ENCODE measurements at regions of chr1 and their contacts with region 1.

Region 1: DNA sequence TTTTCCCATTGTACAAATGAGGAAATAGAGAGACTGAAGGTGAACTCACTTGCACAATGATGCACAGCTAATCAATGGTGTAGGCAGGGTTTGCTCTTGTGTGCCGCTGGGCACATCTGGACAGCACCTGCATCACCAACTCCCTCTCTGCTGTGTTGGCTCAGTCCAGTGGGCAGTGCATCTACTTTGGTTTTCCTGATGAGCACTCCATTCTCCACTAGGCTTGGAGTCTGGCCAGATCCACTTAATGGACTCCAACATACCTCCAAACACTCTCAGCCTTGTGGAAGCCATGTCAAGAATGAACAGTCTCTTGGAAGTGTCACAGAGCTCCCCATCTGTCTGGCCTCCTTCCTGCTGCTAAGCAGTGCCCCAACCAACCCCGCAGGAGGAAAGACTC is 152.2 kb downstream of the HIVEP3 start:
- DNase-seq: no peak
- H3K4me3 ChIP-seq: no peak overlapping the region
- H3K27ac ChIP-seq: peak overlapping the region in 1 of 2 donors; percentile 76
- H3K4me1 ChIP-seq: peaks cover 2 to 7% of the 10 kb centered on the region in 2 donors
- H3K27me3 ChIP-seq: no peaks in the 10 kb centered on the region
- CTCF ChIP-seq: no peak
- POLR2A ChIP-seq: no peak

Region 2: DNA sequence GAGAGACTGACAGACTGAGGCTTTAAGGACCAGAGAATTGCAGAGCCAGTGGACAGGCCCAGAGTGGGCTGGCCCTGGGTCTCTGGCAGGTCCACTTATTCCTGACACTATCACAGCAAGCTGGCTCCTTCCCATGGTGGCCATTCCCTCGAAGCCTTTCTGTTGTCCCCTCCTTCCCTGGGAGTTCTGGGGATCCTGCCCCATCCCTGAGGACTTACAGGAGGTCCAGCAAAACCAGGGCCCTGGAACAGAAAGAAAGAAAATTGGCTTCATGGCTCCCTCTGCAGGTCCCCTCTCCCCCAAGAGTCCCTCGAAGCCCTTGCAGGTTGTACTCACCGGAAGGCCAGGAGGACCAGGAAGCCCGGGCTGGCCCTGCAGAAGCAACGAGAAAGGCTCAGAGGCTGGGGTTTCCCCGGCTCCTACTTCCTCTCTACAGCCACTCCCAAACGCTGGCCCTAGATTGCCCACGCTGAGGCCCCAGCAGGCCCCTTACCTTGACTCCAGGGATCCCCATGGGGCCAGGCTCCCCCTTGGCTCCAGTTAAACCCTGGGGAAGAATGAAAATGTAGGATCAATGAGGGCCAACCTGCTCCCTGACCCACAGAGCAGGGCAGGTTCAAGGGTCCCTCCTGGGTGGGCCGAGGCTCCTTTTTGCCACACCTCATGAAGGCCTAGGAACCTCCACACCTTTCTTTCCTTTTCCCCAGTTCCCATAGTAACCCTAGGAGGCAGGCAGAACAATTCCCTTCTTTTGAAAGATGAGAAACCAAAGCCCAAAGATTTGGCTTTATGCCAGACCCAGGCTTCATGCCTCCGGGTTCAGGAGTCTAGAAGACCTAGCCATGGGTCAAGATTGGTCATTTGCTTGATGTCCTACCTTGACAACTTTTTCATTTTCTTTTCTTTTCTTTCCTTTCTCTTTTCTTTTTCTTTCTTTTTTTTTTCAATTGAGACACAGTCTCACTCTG is 1454.0 kb before region 1 on chr1:
- intact Hi-C with region 1: no loop called
- DNase-seq: no peak
- H3K4me3 ChIP-seq: no peak overlapping the region
- H3K27ac ChIP-seq: no peak overlapping the region
- H3K4me1 ChIP-seq: peaks cover 5 to 13% of the 10 kb centered on the region in 2 donors
- H3K27me3 ChIP-seq: peaks cover 6 to 8% of the 10 kb centered on the region in 2 donors
- CTCF ChIP-seq: no peak
- POLR2A ChIP-seq: no peak

Region 3: DNA sequence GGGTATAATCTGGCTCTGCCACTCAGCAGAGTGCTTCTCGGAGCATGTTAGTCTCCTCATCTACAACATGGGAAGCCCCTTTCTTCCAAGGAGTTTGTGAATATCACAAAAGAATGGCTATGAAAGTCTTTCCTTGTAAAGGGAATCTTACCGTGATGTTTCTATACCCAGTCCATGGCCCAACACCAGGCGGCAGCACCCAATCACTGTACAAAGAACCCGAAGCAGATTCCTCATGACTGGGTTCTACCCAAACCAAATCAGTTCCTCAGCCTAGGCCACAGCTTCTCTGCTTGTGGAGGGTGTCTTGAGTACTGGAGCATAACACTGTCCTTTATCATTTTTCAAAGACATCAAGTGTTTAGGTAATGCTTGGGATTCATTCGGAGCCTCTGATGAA is 728.4 kb before region 1 on chr1:
- intact Hi-C with region 1: no loop called
- DNase-seq: no peak
- H3K4me3 ChIP-seq: no peak overlapping the region
- H3K27ac ChIP-seq: no peak overlapping the region
- H3K4me1 ChIP-seq: no peaks in the 10 kb centered on the region
- H3K27me3 ChIP-seq: no peaks in the 10 kb centered on the region
- CTCF ChIP-seq: no peak
- POLR2A ChIP-seq: no peak

Region 4: DNA sequence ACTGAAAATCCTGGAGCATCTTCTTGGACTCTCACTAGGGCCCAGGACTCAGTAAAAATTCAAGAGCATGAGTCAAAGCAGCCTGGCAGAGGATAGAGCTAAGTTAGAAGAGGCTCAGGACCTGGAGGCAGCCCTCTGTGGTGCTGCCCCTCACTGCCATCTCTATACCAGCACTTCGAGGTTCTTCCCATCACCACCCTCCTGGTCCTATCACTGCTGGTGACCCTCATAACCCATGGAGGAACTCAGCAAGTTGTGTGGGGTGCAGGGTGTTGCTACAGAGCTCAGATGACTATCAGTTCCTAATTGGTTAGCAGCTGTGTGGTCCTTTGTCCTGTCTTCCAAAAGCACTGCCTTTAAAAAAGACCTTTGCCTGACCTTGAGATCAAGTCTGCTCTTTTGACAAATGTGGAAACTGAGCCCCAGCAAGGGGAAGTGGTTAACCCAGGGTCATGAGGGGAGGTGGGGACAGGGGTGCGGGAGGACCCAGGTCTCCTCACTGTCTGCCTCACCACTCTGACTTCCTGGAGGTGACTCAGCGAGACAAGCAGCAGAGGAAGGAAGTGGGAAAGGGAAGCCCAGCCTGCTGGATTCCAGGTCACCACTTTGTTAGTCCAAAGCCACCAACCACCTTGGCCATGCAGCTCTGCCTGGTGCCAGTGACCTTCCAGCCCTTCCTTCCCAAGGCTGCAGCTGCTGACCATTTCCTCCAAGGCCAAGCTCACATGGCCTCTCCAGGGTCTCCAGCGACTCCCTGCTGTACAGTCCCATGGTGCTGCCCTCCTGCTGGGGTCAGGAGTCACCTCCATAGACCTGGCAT is 82.7 kb before region 1 on chr1:
- intact Hi-C with region 1: no loop called
- DNase-seq: no peak
- H3K4me3 ChIP-seq: no peak overlapping the region
- H3K27ac ChIP-seq: no peak overlapping the region
- H3K4me1 ChIP-seq: peaks cover 0 to 4% of the 10 kb centered on the region in 2 donors
- H3K27me3 ChIP-seq: no peaks in the 10 kb centered on the region
- CTCF ChIP-seq: no peak
- POLR2A ChIP-seq: no peak

Region 5: DNA sequence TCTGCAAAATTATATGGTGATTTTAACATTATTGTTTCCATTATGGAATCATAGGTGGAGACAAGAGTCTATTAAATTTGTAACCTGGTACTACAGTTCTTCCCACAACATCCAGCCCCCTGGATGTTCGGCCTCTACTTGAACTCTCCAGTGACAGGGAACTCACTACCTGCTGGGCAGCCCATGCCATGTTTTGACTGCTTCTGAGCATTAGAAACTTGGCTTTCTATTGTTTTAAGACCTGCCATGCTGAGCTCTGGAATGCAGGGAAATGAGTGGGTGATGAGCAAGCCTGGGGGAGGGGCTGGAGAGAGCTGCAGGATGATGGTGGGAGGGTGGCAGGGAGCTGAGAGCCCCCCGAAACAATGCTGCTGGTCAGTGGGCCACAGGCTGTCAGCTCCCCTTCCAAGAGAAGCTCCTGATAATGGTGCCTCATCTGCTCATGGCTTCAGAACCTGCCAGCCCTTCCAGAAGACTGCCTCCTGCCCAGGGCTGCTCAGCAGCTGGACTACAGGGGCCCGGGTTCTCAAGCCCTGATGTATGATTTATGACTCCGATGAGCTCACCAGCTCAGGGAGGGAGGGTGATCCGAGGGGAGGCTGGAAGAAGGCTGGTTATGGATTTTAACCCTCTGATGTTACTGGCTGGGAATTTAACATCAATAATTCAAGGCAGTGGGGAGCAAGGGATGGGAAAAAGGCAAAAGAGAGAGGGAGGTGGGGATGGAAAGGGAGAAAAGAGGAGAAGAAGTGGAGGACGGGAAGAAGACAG is 52.8 kb before region 1 on chr1:
- intact Hi-C with region 1: no loop called
- DNase-seq: no peak
- H3K4me3 ChIP-seq: no peak overlapping the region
- H3K27ac ChIP-seq: no peak overlapping the region
- H3K4me1 ChIP-seq: no peaks in the 10 kb centered on the region
- H3K27me3 ChIP-seq: no peaks in the 10 kb centered on the region
- CTCF ChIP-seq: no peak
- POLR2A ChIP-seq: no peak

Region 6: DNA sequence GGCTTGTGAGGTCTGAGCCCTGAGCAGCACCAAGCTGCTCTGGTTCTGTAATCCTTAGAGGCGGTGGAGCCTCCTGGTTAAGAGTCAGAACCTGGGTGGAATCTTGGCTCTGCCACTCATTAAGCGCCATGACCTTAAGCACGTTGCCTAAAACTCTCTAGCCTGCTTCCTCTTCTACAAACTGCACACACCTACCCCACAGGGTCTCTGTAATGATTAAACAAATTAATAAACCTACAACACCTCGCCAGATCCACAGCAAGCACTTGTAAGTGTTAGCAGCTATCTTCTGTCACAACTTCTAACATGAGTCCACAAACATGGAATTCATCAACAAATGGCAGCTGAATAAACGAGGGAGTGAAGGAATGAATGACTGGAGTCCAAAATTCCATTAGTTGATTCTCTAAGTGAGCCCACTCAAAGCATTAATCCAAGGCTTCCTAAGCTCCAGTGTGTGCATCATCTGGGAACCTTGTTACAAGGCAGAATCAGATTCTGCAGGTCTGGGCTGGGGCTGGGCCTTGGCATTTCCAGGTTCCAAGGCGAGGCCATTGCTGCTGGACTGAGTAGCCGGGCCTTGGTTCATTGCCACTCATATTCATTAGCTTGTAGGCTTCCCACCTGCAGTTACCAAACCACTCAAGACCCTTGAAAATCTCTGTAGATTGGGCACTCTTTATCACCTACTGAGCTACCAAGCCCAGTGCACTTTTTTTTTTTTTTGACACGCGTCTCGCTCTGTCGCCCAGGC is 16.4 kb before region 1 on chr1:
- intact Hi-C with region 1: loop called (anchors 1 kb)
- DNase-seq: no peak
- H3K4me3 ChIP-seq: no peak overlapping the region
- H3K27ac ChIP-seq: no peak overlapping the region
- H3K4me1 ChIP-seq: no peaks in the 10 kb centered on the region
- H3K27me3 ChIP-seq: no peaks in the 10 kb centered on the region
- CTCF ChIP-seq: no peak
- POLR2A ChIP-seq: no peak